ENCODE measurements at regions of chr3 and their contacts with region 1.

Region 1: DNA sequence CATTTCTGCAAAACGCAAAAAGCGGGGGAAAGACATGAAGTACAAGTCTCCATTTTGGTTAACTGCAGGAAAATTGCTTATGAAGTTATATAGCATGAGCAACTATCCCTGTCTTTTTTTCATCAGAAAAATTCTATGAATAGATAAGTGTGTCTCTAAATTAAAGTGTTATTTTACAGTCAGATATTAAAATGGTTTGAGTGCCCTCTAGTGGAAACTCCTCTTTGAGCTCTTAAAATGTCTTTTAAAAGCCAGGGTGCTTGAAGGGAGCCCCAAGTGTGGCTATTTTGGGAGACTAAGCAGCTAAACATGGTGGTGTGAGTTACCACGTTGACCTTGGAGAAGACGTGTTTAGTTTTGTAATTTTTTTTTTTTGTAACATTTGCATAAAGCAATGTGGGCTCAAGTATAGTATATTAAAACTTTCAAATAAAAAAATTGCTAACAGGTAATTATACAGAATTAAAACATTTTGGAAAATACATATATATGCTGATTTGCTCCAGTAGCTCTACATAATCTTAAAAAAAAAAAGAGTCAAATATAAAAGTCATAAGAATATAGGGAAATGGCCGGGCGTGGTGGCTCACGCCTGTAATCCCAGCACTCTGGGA is 77.2 kb downstream of the PPP2R3A start:
- DNase-seq: peak in 4 of 42 donors; percentile 5 to 31 (median 10)

Region 2: GRCh38 chr3:135918580-135918962 is 124.1 kb before region 1 on chr3:
- intact Hi-C with region 1: loop called (anchors 5 kb)
- DNase-seq: peak in 1 of 42 donors; percentile 14

Region 3: GRCh38 chr3:136007166-136007565 is 35.5 kb before region 1 on chr3:
- intact Hi-C with region 1: no loop called
- DNase-seq: no peak

Measured in head of caudate nucleus (tissue), 42 donors.